Activated CD8-positive, alpha-beta memory T cell treated with anti-CD3 and anti-CD28 coated beads, Interleukin-2, amount 10 ng/mL, durations not matched to agents 7 days and 5 days (primary cell): ENCODE measurements at regions of chr16 and their contacts with region 1.

Region 1: DNA sequence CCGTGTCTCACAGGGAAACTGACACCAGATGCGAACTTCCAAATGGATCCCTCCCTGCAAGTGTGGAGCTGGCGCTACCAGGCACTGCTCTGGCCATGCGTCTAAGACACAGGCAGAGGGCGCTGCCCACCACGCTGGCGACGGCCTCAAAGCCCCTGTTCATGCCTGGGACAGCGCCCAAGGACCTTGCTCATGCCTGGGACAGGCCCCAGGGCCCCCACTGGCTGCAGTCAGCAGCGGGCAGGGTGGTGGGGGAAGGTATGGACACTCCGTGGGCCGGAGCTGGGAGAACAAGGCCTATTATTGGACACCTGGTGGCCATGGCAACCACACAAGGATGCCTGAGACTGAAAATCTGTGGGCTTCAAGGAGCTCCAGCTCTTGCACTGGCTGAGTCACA is 8.8 kb downstream of the ZG16B start:
- DNase-seq: peak; percentile 74
- ATAC-seq: peak; percentile 82
- H3K4me3 Mint-ChIP-seq: no peak overlapping the region
- H3K27ac Mint-ChIP-seq: no peak overlapping the region
- H3K4me1 Mint-ChIP-seq: peaks cover 24% of the 10 kb centered on the region
- H3K27me3 Mint-ChIP-seq: peaks cover 5% of the 10 kb centered on the region

Region 2: DNA sequence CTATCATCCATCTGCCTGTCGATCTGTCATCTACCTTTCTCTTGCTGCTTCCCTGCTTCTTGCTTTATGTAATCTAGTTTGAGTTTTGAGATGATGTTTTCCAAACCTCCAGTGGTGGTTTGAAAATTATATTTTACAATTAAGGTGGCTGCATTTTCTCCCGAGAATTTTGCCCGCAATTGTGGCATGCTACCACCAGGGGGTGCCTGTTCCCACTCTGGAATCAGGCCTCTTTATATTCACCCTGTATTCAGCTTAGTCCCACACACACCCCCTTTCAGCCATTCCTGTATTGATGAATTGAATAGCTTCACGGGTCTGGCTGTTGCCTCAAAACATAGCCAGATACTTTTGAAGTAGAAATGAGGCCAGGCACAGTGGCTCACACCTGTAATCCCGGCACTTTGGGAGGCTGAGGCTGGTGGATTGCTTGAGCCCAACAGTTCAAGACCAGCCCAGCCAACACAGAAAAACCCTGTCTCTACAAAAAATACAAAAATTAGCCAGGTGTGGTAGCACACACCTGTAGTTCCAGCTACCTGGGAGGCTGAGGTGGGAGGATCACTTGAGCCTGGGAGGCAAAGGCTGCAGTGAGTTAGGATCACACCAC is 15.9 kb after region 1 on chr16:
- CTCF ChIA-PET with region 1: interaction called, 20 read pairs
- DNase-seq: no peak
- ATAC-seq: no peak
- H3K4me3 Mint-ChIP-seq: no peak overlapping the region
- H3K27ac Mint-ChIP-seq: no peak overlapping the region
- H3K4me1 Mint-ChIP-seq: peaks cover 4% of the 10 kb centered on the region
- H3K27me3 Mint-ChIP-seq: peaks cover 9% of the 10 kb centered on the region

Region 3: DNA sequence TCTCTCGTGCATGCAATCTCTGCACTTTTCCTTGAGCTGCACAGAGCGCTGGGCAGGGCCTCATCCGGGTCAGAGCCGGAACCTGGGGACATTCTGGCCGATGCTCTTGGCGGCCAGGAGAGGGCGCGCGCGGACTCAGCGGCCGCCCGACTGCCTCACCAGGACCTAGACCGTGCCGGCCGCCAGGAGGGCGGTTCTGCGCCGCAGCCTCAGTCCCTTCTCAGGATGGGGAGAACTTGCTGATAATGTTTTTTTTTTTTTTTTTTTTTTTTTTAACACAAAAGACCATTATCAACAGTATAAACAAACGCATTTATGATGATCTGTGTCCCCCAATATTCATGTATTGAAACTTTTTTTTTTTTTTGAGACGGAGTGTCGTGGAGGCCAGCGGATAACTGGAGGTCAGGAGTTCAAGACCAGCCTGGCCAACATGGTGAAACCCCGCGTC is 36.0 kb after region 1 on chr16:
- CTCF ChIA-PET with region 1: interaction called, 36 read pairs
- DNase-seq: peak; percentile 81
- ATAC-seq: peak; percentile 100
- H3K4me3 Mint-ChIP-seq: no peak overlapping the region
- H3K27ac Mint-ChIP-seq: no peak overlapping the region
- H3K4me1 Mint-ChIP-seq: peaks cover 3% of the 10 kb centered on the region
- H3K27me3 Mint-ChIP-seq: no peaks in the 10 kb centered on the region

Region 4: DNA sequence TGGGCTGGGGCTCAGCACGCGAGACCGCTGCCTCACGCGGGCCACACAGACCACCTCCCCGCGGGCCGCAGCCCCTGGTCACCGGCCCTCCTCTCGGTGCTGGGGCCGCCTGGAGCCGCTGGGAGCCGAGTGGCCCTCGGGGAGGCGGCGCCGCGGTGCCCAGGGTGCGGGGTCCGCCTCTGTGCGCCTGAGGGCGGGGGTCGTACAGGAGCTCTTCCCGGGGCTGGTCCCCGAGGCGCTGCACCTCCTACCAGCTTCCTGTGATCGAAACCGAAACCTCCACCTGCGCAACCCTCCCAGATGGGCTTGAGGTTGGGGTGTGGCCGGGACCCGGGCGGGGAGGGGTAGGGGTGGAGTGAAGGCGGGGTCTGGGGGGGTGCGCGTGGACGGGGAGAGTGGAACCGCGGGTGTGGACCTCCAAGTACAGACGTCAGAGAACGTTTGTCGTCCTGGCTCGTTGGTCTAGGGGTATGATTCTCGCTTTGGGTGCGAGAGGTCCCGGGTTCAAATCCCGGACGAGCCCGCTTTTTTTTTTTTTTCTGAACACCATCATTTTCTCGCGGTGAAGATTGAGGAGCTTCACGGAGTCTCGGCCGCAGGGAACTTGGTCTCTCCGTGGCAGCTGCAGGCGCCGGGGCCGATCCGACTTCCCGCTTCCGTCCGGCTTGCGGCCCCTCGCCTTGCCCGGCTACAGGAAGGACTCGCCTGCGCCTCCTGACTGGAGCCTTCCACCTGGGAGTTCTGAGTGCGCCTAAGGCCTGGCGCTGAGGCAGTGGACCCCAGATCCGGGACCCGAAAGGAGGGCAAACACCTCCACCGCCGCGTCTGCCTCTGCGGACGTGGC is 319.8 kb after region 1 on chr16:
- CTCF ChIA-PET with region 1: no interaction called
- DNase-seq: peak; percentile 96
- ATAC-seq: peak; percentile 88
- H3K4me3 Mint-ChIP-seq: peak overlapping the region; percentile 83
- H3K27ac Mint-ChIP-seq: peak overlapping the region; percentile 92
- H3K4me1 Mint-ChIP-seq: peaks cover 43% of the 10 kb centered on the region
- H3K27me3 Mint-ChIP-seq: peaks cover 25% of the 10 kb centered on the region